Dendritic cell treated with granulocyte-macrophage colony-stimulating factor and Interleukin-4, amounts not matched to agents 40 ng/mL and 50 ng/mL, for 4 days (primary cell): ENCODE measurements at regions of chr10 and their contacts with region 1.

Region 1: GRCh38 chr10:28381903-28382347 is 79.1 kb upstream of the MPP7 start:
- H3K4me3 Mint-ChIP-seq: no peak overlapping the region
- H3K27ac Mint-ChIP-seq: no peak overlapping the region
- H3K4me1 Mint-ChIP-seq: peaks cover 49% of the 10 kb centered on the region
- H3K27me3 Mint-ChIP-seq: peaks cover 5% of the 10 kb centered on the region

Region 2: GRCh38 chr10:27783660-27784059 is 598.3 kb before region 1 on chr10:
- intact Hi-C with region 1: loop called (anchors 10 kb)
- H3K4me3 Mint-ChIP-seq: no peak overlapping the region
- H3K27ac Mint-ChIP-seq: no peak overlapping the region
- H3K4me1 Mint-ChIP-seq: no peaks in the 10 kb centered on the region
- H3K27me3 Mint-ChIP-seq: peaks cover 7% of the 10 kb centered on the region

Region 3: GRCh38 chr10:28250782-28251181 is 131.1 kb before region 1 on chr10:
- intact Hi-C with region 1: loop called (anchors 1 kb)
- H3K4me3 Mint-ChIP-seq: no peak overlapping the region
- H3K27ac Mint-ChIP-seq: no peak overlapping the region
- H3K4me1 Mint-ChIP-seq: peaks cover 38% of the 10 kb centered on the region
- H3K27me3 Mint-ChIP-seq: no peaks in the 10 kb centered on the region

Region 4: DNA sequence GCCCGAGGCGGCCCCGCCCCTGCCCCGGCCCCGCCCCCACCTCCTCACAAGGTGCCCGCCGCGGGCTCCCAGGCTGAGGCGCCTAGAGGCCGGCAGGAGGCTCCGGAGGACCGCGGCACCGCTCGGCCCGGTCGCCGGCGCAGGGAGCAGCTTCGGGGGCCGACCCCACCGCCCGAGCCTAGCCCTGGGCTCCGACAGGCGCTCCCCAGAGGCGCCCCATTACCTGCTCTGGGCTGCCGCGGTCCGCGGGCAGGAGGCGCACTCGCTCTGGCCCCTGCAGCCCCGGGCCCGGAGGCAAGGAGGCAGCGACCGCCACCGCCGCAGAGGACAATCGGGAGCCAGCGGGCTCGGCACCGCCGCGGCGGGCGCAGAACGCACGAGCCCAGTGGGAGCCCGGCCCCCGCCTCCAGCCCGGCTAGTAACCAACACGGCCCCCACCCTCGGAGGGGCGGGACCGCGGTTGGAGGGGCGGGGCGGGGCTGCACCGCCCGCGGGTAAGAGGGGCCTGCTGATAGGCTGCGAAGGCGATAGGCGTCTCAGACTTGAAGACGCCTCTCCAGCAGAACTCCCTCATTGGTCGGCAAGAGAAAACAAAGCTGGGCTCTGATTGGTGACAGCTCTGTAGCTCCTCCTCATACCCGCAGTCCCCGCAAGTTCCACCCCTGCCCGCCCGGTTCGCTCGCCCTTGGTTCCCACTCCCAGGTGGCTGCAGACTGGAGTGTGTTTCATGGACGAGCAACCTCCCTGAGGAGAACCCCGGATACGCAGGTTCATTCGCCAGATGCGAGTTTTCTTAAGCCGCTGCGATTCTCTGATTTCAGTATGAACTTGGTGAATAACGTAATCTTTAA is 79.1 kb before region 1 on chr10 and contains the start of gene MPP7:
- intact Hi-C with region 1: loop called (anchors 2 kb)
- H3K4me3 Mint-ChIP-seq: peak within 1 kb of the TSS; percentile 84
- H3K27ac Mint-ChIP-seq: peak within 1 kb of the TSS; percentile 77
- H3K4me1 Mint-ChIP-seq: peaks cover 38% of the 10 kb centered on the region
- H3K27me3 Mint-ChIP-seq: no peaks in the 10 kb centered on the region